MCF 10A (cell line): ENCODE measurements at regions of chr11 and their contacts with region 1.

Region 1: DNA sequence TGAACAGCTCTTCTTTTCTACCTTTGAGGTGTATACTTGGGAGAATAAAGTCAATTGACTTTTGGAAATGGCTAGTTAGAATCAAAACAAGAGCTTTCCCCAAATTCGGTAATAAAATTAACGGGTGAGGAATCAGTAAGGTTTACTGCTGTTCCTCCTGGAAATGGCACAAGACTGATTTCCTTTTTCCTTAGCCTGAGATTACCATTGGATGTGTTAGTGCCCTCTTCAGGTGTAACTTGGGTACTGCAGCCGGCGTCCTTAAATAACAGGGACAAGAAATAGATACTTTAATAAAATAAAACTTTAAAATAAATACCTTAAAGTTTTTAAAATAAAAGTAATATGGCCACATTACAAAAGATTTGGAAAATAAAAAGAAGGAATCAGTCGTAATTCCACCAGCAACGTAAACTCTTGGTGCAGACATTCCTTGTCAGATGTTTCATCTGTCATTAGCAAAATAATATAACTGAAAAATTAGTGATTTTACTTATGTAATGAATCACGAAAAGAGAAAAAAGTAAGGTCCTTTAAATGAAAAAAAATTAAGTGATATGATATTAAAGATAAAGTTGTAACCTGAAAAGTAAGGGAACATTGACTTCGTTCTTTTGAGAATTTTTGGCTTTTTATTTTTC is 29.7 kb downstream of the ZFTA start:
- DNase-seq: peak; percentile 80
- H3K4me3 Mint-ChIP-seq: no peak overlapping the region
- H3K27ac Mint-ChIP-seq: no peak overlapping the region
- H3K4me1 Mint-ChIP-seq: peaks cover 5% of the 10 kb centered on the region
- H3K27me3 Mint-ChIP-seq: no peaks in the 10 kb centered on the region
- CTCF ChIP-seq: peak; percentile 84

Region 2: GRCh38 chr11:63592975-63593395 is 145.9 kb before region 1 on chr11:
- CTCF ChIA-PET with region 1: no interaction called
- POLR2A ChIA-PET with region 1: no interaction called
- intact Hi-C with region 1: loop called (anchors 1 kb)
- DNase-seq: peak; percentile 28
- H3K4me3 Mint-ChIP-seq: no peak overlapping the region
- H3K27ac Mint-ChIP-seq: no peak overlapping the region
- H3K4me1 Mint-ChIP-seq: peaks cover 4% of the 10 kb centered on the region
- H3K27me3 Mint-ChIP-seq: no peaks in the 10 kb centered on the region
- CTCF ChIP-seq: peak; percentile 52

Region 3: GRCh38 chr11:63660972-63661371 is 77.9 kb before region 1 on chr11:
- CTCF ChIA-PET with region 1: interaction called, 16 read pairs
- POLR2A ChIA-PET with region 1: no interaction called
- intact Hi-C with region 1: no loop called
- DNase-seq: no peak
- H3K4me3 Mint-ChIP-seq: no peak overlapping the region
- H3K27ac Mint-ChIP-seq: peak overlapping the region; percentile 49
- H3K4me1 Mint-ChIP-seq: peaks cover 10% of the 10 kb centered on the region
- H3K27me3 Mint-ChIP-seq: no peaks in the 10 kb centered on the region
- CTCF ChIP-seq: no peak

Region 4: GRCh38 chr11:63681321-63682049 is 57.4 kb before region 1 on chr11 and contains the start of gene RTN3:
- CTCF ChIA-PET with region 1: interaction called, 6 read pairs
- POLR2A ChIA-PET with region 1: interaction called, 33 read pairs
- intact Hi-C with region 1: no loop called
- DNase-seq: peak; percentile 97
- H3K4me3 Mint-ChIP-seq: peak within 1 kb of the TSS; percentile 92
- H3K27ac Mint-ChIP-seq: peak within 1 kb of the TSS; percentile 52
- H3K4me1 Mint-ChIP-seq: peaks cover 21% of the 10 kb centered on the region
- H3K27me3 Mint-ChIP-seq: no peaks in the 10 kb centered on the region
- CTCF ChIP-seq: no peak
- total RNA-seq, gene RTN3: 95.4 and 129 TPM in 2 replicates

Region 5: GRCh38 chr11:63768237-63769043 is 29.6 kb after region 1 on chr11 and contains the start of gene ZFTA:
- CTCF ChIA-PET with region 1: interaction called, 15 read pairs
- POLR2A ChIA-PET with region 1: interaction called, 3 read pairs
- intact Hi-C with region 1: no loop called
- DNase-seq: peak; percentile 50
- H3K4me3 Mint-ChIP-seq: peak within 1 kb of the TSS; percentile 97
- H3K27ac Mint-ChIP-seq: peak within 1 kb of the TSS; percentile 68
- H3K4me1 Mint-ChIP-seq: peaks cover 12% of the 10 kb centered on the region
- H3K27me3 Mint-ChIP-seq: no peaks in the 10 kb centered on the region
- CTCF ChIP-seq: peak; percentile 81
- total RNA-seq, gene ZFTA: 2.6 and 5.2 TPM in 2 replicates